Transverse colon (tissue), 4 donors: ENCODE measurements at regions of chr5 and their contacts with region 1.

Region 1: DNA sequence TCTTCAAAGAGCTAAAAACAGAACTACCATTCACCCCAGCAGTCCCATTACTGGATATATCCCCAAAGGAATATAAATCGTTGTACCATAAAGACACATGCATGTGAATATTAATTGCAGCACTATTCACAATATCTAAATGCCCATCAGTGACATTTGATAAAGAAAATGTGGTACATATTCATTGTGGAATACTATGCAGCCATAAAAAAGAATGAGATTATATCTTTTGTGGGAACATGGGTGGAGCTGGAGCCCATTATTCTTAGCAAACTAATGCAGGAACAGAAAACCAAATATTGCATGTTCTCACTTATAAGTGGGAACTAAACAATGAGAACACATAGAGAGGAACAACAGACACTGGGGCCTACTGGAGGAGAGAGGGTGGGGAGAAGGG is 38.7 kb downstream of the FCHO2 start:
- DNase-seq: no peak
- H3K4me3 ChIP-seq: no peak overlapping the region
- H3K27ac ChIP-seq: no peak overlapping the region
- H3K4me1 ChIP-seq: no peaks in the 10 kb centered on the region
- H3K27me3 ChIP-seq: no peaks in the 10 kb centered on the region
- CTCF ChIP-seq: no peak
- EP300 ChIP-seq: no peak
- POLR2A ChIP-seq: no peak

Region 2: GRCh38 chr5:72938206-72938605 is 56.4 kb before region 1 on chr5:
- in situ Hi-C with region 1: no loop called
- intact Hi-C with region 1: loop called (anchors 2 kb)
- DNase-seq: no peak
- H3K4me3 ChIP-seq: no peak overlapping the region
- H3K27ac ChIP-seq: peak overlapping the region; percentile 51 to 63 (median 60)
- H3K4me1 ChIP-seq: peaks cover 5 to 18% (median 16%) of the 10 kb centered on the region in 4 donors
- H3K27me3 ChIP-seq: no peaks in the 10 kb centered on the region
- CTCF ChIP-seq: no peak
- EP300 ChIP-seq: no peak
- POLR2A ChIP-seq: no peak

Region 3: DNA sequence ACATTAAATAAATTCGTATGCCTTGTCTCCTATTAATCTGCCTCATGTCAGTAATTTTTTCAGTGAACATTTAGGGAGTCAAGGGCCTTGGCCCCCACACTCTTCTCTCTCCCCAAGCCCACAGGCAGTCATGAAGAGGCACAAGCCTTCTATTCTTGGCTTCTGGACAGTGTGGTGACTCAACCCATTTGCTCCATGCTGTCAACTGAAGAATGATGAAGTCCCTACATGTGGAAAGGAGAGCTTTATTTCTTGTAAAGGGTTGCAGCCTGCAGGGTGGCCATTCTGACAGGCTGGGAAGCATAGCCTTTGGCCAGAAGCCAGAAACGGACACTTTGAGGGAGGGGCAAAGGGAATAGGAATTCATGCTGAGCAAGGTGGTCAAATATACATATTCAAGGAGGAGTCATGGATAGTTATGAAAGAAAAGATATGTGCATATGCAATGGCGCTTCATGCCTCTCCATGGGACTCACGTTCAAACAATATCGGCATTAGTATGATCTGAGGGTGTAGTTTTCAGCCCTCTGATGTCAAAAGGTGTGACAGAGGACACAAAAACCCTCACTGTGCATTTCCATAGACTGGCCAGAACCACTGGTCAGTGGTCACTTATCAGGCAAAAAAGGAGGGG is 539.5 kb after region 1 on chr5:
- in situ Hi-C with region 1: no loop called
- intact Hi-C with region 1: no loop called
- DNase-seq: no peak
- H3K4me3 ChIP-seq: no peak overlapping the region
- H3K27ac ChIP-seq: no peak overlapping the region
- H3K4me1 ChIP-seq: no peaks in the 10 kb centered on the region
- H3K27me3 ChIP-seq: peaks cover 13% of the 10 kb centered on the region
- CTCF ChIP-seq: no peak
- EP300 ChIP-seq: no peak
- POLR2A ChIP-seq: no peak